AG04449 (cell line): ENCODE measurements at regions of chr1 and their contacts with region 1.

Region 1: DNA sequence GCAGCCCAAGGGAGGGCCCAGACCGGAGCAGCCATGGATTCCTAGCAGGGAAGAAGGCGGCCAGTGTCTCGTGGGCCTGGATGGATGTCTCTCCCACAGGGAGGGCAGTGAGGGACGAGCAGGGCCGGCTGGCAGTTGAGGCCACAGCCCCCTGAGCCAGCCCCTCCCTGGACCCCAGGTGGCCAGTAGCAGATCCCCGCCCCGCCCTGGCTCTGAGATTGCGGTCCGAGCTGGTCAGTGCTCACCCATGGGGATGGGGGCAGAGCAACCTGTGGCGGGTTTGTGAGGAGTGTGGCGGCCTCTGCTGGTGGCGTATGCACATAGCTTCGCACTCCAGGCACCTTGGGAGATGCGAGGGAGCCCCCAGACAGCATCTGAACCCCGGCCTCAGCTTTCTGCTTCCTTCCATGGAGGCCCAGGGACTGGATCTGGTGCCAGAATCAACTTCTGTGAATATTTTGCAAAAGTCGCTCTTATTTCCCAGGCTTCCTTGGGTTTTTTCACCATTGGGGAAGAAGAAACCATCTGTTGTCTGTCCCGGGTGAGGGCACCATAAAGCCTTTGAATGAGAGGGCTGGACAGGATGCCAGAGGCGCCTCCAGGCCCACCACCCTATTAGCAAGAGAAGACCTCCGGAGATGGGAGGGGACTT is 8.4 kb upstream of the KCNN3 start:
- DNase-seq: no peak
- H3K4me3 ChIP-seq: no peak overlapping the region
- CTCF ChIP-seq: peak; percentile 94

Region 2: DNA sequence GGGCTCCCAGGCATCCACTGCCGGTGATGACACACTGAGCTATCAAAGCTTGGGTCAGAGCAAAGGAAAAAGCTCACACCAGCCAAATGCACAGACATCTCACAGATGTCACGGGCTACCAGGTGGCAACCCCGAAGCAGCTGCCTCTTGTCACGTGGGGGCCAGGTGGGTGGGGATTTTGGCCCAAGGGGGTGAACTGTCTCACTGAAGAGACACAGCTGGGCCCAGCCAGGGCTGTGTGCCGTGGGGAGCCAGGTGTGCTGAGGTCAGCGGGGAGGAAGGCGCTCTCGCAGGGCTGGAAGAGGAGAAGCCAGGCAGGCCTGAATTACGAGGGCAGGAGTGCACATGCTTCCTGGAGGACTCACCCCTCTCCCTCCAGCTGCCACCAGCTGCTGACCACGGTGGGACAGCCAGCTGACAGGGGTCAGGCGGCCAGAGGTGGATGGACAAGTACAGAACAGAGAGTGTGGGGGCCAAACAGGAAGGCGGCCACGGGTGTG is 40.8 kb before region 1 on chr1:
- CTCF ChIA-PET with region 1: no interaction called
- POLR2A ChIA-PET with region 1: no interaction called
- DNase-seq: no peak
- H3K4me3 ChIP-seq: no peak overlapping the region
- CTCF ChIP-seq: no peak

Region 3: GRCh38 chr1:154888757-154889156 is 10.3 kb after region 1 on chr1:
- CTCF ChIA-PET with region 1: interaction called, 38 read pairs
- POLR2A ChIA-PET with region 1: no interaction called
- DNase-seq: no peak
- H3K4me3 ChIP-seq: no peak overlapping the region
- CTCF ChIP-seq: no peak

Region 4: DNA sequence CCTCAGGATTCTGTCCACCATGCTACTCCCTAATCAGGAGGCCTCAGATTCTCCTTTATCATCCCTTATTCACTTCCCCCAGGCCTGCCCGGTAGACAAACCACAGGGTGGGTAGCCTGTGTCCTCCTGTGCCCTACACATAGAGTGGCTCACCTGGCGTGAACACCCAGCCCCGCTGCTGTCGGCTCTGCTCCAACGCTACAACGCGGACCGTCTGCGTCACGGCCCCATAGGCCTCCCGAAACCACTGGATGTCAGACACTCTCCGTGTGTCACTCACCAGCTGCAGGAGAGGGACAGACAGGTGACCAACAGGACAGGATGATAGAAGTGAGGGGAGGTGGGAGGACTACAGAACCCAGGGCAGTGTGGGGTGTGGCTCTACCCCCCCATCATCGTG is 47.7 kb after region 1 on chr1:
- CTCF ChIA-PET with region 1: no interaction called
- POLR2A ChIA-PET with region 1: no interaction called
- DNase-seq: no peak
- H3K4me3 ChIP-seq: no peak overlapping the region
- CTCF ChIP-seq: no peak